ENCODE measurements at regions of chr2 and their contacts with region 1.

Region 1: GRCh38 chr2:84925724-84926376 is 20.4 kb downstream of the TMSB10 start:
- DNase-seq: peak; percentile 99
- ATAC-seq: peak; percentile 91
- H3K4me3 Mint-ChIP-seq: peak overlapping the region; percentile 89
- H3K27ac Mint-ChIP-seq: peak overlapping the region; percentile 88
- H3K4me1 Mint-ChIP-seq: peaks cover 49% of the 10 kb centered on the region
- H3K27me3 Mint-ChIP-seq: no peaks in the 10 kb centered on the region

Region 2: GRCh38 chr2:84486441-84487115 is 439.3 kb before region 1 on chr2:
- CTCF ChIA-PET with region 1: interaction called, 18 read pairs
- POLR2A ChIA-PET with region 1: no interaction called
- DNase-seq: no peak
- ATAC-seq: no peak
- H3K4me3 Mint-ChIP-seq: no peak overlapping the region
- H3K27ac Mint-ChIP-seq: no peak overlapping the region
- H3K4me1 Mint-ChIP-seq: peaks cover 11% of the 10 kb centered on the region
- H3K27me3 Mint-ChIP-seq: no peaks in the 10 kb centered on the region

Region 3: GRCh38 chr2:84603911-84604310 is 321.9 kb before region 1 on chr2:
- CTCF ChIA-PET with region 1: no interaction called
- POLR2A ChIA-PET with region 1: no interaction called
- DNase-seq: no peak
- ATAC-seq: no peak
- H3K4me3 Mint-ChIP-seq: no peak overlapping the region
- H3K27ac Mint-ChIP-seq: no peak overlapping the region
- H3K4me1 Mint-ChIP-seq: no peaks in the 10 kb centered on the region
- H3K27me3 Mint-ChIP-seq: no peaks in the 10 kb centered on the region

Region 4: DNA sequence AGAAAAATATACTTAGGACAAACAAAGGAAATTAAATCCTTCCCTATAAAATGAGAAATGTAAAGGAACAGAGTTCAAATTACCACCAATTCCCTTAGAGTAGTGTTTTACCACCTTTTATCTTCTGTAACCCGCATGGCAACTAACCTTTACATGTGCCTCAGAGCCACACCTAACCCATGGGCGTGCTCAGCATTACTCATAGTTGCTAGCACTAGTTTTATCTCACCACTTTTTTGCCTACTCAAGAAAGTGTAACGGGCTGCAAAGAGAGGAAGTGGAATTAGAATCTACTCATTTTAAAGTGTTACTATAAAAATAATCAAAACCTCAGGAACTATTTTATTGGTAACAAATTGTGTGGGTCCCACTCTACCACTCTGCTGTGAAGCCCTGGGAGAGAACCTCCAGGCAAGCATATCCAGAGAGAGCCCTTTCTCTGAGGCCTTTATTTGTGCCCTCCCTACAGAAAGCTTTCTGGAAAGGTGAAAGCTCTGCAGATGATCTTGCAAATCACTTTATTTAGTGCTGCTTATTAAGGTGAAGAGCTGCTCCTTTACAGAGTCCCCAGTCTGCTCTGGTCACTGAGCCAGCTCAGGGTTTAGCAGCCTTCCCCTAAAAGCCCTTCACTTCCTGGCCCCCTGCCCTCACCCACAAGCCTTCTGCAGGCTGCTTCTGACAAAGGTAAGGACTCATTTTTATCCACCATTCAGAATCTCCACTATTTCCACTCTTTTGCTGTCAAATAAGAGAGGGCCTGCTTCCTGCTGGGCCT is 143.7 kb before region 1 on chr2:
- CTCF ChIA-PET with region 1: interaction called, 12 read pairs
- POLR2A ChIA-PET with region 1: no interaction called
- DNase-seq: peak; percentile 77
- ATAC-seq: peak; percentile 93
- H3K4me3 Mint-ChIP-seq: peak overlapping the region; percentile 66
- H3K27ac Mint-ChIP-seq: peak overlapping the region; percentile 95
- H3K4me1 Mint-ChIP-seq: peaks cover 68% of the 10 kb centered on the region
- H3K27me3 Mint-ChIP-seq: no peaks in the 10 kb centered on the region

Region 5: DNA sequence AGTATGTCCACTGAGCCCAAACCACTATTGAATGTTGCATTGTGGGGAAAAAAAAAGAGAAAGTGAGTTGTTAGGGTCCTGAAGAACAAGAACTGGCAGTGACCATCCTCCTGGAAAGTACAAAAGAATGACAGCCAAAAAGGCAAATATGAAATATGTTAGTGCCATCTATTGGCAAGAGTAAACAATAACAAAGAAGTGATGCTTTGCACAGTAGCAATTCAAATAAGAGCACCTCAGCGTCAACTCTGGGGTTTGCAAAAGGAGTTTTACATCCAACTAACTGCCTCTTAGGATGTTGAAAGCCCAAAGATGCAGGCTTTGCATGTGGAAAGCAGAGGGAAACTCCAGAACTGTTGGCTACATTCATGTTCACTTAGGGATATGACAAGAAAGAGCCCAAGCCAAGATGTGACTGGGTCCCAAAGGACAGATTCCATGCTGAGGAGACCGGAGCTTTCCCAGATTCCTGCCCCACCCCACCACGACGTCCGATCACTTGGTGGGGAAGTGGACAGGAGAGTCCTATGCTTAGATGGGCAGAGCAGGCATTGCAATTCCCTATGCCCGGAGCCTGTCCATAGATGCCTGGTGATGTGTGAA is 60.6 kb before region 1 on chr2:
- CTCF ChIA-PET with region 1: interaction called, 397 read pairs
- POLR2A ChIA-PET with region 1: interaction called, 4 read pairs
- DNase-seq: peak; percentile 27
- ATAC-seq: peak; percentile 61
- H3K4me3 Mint-ChIP-seq: no peak overlapping the region
- H3K27ac Mint-ChIP-seq: peak overlapping the region; percentile 75
- H3K4me1 Mint-ChIP-seq: peaks cover 82% of the 10 kb centered on the region
- H3K27me3 Mint-ChIP-seq: no peaks in the 10 kb centered on the region

Region 6: DNA sequence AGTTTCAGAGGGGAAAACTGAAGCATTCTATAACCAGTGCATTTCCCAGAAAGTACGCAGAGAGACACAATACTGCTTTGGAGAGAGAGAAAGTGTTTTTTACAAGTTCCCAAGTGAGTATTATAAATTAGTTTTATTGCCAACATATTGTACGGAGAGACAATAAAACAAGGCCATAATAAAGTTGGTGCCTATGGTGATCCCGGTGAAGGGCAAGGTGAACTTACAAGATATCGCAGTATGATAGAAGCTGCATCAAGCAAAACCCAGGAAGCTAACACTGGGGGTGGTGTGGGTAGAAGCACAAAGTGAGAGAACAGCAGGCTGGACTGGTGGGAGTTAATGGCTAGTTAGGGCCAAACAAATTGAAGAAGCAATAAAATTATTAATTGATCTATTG is 12.9 kb before region 1 on chr2:
- CTCF ChIA-PET with region 1: interaction called, 222 read pairs
- POLR2A ChIA-PET with region 1: interaction called, 61 read pairs
- DNase-seq: no peak
- ATAC-seq: no peak
- H3K4me3 Mint-ChIP-seq: no peak overlapping the region
- H3K27ac Mint-ChIP-seq: no peak overlapping the region
- H3K4me1 Mint-ChIP-seq: peaks cover 41% of the 10 kb centered on the region
- H3K27me3 Mint-ChIP-seq: peaks cover 2% of the 10 kb centered on the region

Region 7: GRCh38 chr2:84970868-84971509 is 45.1 kb after region 1 on chr2 and contains the start of gene KCMF1:
- CTCF ChIA-PET with region 1: interaction called, 57 read pairs
- POLR2A ChIA-PET with region 1: interaction called, 40 read pairs
- DNase-seq: peak; percentile 79
- ATAC-seq: peak; percentile 57
- H3K4me3 Mint-ChIP-seq: peak within 1 kb of the TSS; percentile 96
- H3K27ac Mint-ChIP-seq: peak within 1 kb of the TSS; percentile 100
- H3K4me1 Mint-ChIP-seq: peaks cover 47% of the 10 kb centered on the region
- H3K27me3 Mint-ChIP-seq: no peaks in the 10 kb centered on the region
- total RNA-seq, gene KCMF1: 88.9 to 92.5 TPM

Region 8: GRCh38 chr2:85042330-85042729 is 116.5 kb after region 1 on chr2:
- CTCF ChIA-PET with region 1: interaction called, 10 read pairs
- POLR2A ChIA-PET with region 1: no interaction called
- DNase-seq: no peak
- ATAC-seq: no peak
- H3K4me3 Mint-ChIP-seq: no peak overlapping the region
- H3K27ac Mint-ChIP-seq: peak overlapping the region; percentile 31
- H3K4me1 Mint-ChIP-seq: peaks cover 7% of the 10 kb centered on the region
- H3K27me3 Mint-ChIP-seq: no peaks in the 10 kb centered on the region

Region 9: DNA sequence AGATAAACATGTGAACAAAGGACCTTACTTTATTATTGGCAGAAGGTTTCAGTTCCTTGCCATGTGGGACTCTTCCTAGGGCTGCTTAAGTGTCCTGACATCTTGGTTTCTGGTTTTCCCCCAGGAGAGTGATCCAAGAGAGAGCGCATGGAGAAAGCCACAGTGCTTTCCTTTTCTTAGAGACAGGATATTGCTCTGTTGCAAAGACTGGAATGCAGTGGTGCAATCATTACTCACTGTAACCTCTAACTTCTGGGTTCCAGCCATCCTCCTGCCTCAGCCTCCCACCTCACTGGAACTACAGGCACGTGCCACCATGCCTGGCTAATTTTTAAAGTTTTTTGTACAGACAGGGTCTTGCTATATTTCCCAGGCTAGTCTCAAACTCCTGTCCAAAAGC is 169.2 kb after region 1 on chr2:
- CTCF ChIA-PET with region 1: no interaction called
- POLR2A ChIA-PET with region 1: no interaction called
- DNase-seq: no peak
- ATAC-seq: no peak
- H3K4me3 Mint-ChIP-seq: no peak overlapping the region
- H3K27ac Mint-ChIP-seq: no peak overlapping the region
- H3K4me1 Mint-ChIP-seq: no peaks in the 10 kb centered on the region
- H3K27me3 Mint-ChIP-seq: peaks cover 19% of the 10 kb centered on the region